Naive thymus-derived CD8-positive, alpha-beta T cell (primary cell): ENCODE measurements at regions of chr2 and their contacts with region 1.

Region 1: GRCh38 chr2:231612179-231613053 is 19.8 kb downstream of the TEX44 start:
- DNase-seq: peak; percentile 76 to 94 (median 85)
- ATAC-seq: peak; percentile 59 to 76
- H3K4me3 Mint-ChIP-seq: peak overlapping the region; percentile 57 to 91 (median 88)
- H3K27ac Mint-ChIP-seq: peak overlapping the region; percentile 5 to 95 (median 80)
- H3K4me1 Mint-ChIP-seq: peaks cover 10 to 38% (median 30%) of the 10 kb centered on the region in 4 donors
- H3K27me3 Mint-ChIP-seq: no peaks in the 10 kb centered on the region

Region 2: DNA sequence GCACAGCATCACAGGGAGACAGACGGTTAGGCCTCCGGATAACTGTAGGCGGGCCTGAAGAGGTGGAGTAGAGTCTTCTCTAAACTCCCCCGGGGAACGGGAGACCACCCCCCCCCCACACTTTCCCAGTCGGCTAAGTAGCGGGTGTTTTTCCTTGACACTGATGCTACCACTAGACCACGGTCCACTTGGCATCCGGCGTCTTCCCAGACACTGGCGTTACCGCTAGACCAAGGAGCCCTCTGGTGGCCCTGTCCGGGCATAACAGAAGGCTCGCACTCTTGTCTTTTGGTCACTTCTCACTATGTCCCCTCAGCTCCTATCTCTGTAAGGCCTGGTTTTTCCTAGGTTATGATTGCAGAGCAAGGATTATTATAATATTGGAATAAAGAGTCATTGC is 122.4 kb before region 1 on chr2:
- POLR2A ChIA-PET with region 1: no interaction called
- DNase-seq: no peak
- ATAC-seq: no peak
- H3K4me3 Mint-ChIP-seq: no peak overlapping the region
- H3K27ac Mint-ChIP-seq: peak overlapping the region in 1 of 10 donors; percentile 19
- H3K4me1 Mint-ChIP-seq: peaks cover 1 to 8% (median 6%) of the 10 kb centered on the region in 4 donors
- H3K27me3 Mint-ChIP-seq: no peaks in the 10 kb centered on the region

Region 3: GRCh38 chr2:231662028-231662810 is 49.8 kb after region 1 on chr2:
- POLR2A ChIA-PET with region 1: interaction called, 20 read pairs
- DNase-seq: peak; percentile 92 to 99 (median 98)
- ATAC-seq: peak; percentile 88 to 91
- H3K4me3 Mint-ChIP-seq: peak overlapping the region; percentile 71 to 87 (median 82)
- H3K27ac Mint-ChIP-seq: peak overlapping the region; percentile 82 to 99 (median 96)
- H3K4me1 Mint-ChIP-seq: peaks cover 6 to 37% (median 17%) of the 10 kb centered on the region in 4 donors
- H3K27me3 Mint-ChIP-seq: no peaks in the 10 kb centered on the region